ENCODE measurements at regions of chrX and their contacts with region 1.

Region 1: GRCh38 chrX:10098270-10098713 is 58.5 kb upstream of the CLCN4 start:
- DNase-seq: peak; percentile 80
- H3K4me3 Mint-ChIP-seq: peak overlapping the region; percentile 69
- H3K27ac Mint-ChIP-seq: peak overlapping the region; percentile 83
- H3K4me1 Mint-ChIP-seq: peaks cover 51% of the 10 kb centered on the region
- H3K27me3 Mint-ChIP-seq: no peaks in the 10 kb centered on the region

Region 2: GRCh38 chrX:9456250-9457074 is 641.8 kb before region 1 on chrX:
- CTCF ChIA-PET with region 1: no interaction called
- intact Hi-C with region 1: loop called (anchors 2 kb)
- DNase-seq: peak; percentile 45
- H3K4me3 Mint-ChIP-seq: no peak overlapping the region
- H3K27ac Mint-ChIP-seq: peak overlapping the region; percentile 74
- H3K4me1 Mint-ChIP-seq: peaks cover 38% of the 10 kb centered on the region
- H3K27me3 Mint-ChIP-seq: no peaks in the 10 kb centered on the region

Region 3: DNA sequence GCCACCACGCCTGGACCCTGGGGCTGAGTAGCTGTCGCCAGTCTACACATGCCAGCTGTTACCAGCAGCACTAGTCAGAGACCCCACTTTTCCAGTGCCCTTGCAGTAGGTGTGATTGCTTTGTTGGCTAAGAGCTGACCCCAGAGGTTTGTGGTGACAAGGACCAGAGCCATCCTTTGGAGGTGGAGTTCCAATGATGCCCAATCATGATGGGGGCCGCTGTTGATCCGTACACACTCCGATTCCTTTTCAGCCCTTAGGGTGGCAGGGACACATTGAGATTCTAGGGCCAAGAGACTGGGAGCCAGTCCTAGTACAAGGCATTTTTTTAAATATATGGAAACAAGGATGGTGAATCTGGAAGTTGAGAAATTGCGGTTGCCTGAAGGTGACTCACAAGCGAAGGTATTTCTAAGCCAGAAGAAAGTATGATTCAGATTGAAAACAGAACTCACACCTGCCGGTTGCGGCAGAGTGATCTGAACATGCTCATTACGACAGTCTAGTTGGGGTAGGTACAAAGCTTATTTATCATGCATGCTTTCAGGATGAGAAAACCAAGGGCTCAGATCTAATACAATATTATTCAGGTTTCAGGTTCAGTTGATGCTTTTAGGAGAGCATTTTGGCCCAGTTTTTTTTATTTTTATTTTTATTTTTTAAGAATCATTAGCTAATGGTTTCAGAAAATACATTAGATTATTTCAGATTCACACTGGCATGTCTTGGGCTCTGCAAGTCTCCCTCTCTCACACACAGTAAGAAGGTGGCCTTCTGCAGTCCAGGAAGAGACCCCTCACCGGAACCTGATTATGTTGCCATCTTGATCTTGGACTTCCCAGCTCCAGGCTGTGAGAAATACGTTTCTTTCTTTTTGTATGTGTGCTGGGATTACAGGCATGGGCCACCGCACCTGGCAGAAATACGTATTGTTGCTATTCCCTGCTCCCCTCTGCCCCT is 268.7 kb before region 1 on chrX:
- CTCF ChIA-PET with region 1: no interaction called
- intact Hi-C with region 1: loop called (anchors 1 kb)
- DNase-seq: peak; percentile 71
- H3K4me3 Mint-ChIP-seq: no peak overlapping the region
- H3K27ac Mint-ChIP-seq: no peak overlapping the region
- H3K4me1 Mint-ChIP-seq: peaks cover 4% of the 10 kb centered on the region
- H3K27me3 Mint-ChIP-seq: peaks cover 13% of the 10 kb centered on the region

Region 4: GRCh38 chrX:10014462-10015356 is 83.6 kb before region 1 on chrX:
- CTCF ChIA-PET with region 1: no interaction called
- intact Hi-C with region 1: loop called (anchors 2 kb)
- DNase-seq: peak; percentile 71
- H3K4me3 Mint-ChIP-seq: peak overlapping the region; percentile 67
- H3K27ac Mint-ChIP-seq: peak overlapping the region; percentile 30
- H3K4me1 Mint-ChIP-seq: peaks cover 35% of the 10 kb centered on the region
- H3K27me3 Mint-ChIP-seq: peaks cover 4% of the 10 kb centered on the region

Region 5: GRCh38 chrX:10083809-10084208 is 14.5 kb before region 1 on chrX:
- CTCF ChIA-PET with region 1: interaction called, 7 read pairs
- intact Hi-C with region 1: loop called (anchors 1 kb)
- DNase-seq: no peak
- H3K4me3 Mint-ChIP-seq: no peak overlapping the region
- H3K27ac Mint-ChIP-seq: no peak overlapping the region
- H3K4me1 Mint-ChIP-seq: peaks cover 34% of the 10 kb centered on the region
- H3K27me3 Mint-ChIP-seq: no peaks in the 10 kb centered on the region

Region 6: GRCh38 chrX:10111364-10112148 is 13.3 kb after region 1 on chrX:
- CTCF ChIA-PET with region 1: interaction called, 12 read pairs
- intact Hi-C with region 1: loop called (anchors 1 kb)
- DNase-seq: peak; percentile 59
- H3K4me3 Mint-ChIP-seq: peak overlapping the region; percentile 64
- H3K27ac Mint-ChIP-seq: peak overlapping the region; percentile 91
- H3K4me1 Mint-ChIP-seq: peaks cover 56% of the 10 kb centered on the region
- H3K27me3 Mint-ChIP-seq: no peaks in the 10 kb centered on the region

Region 7: DNA sequence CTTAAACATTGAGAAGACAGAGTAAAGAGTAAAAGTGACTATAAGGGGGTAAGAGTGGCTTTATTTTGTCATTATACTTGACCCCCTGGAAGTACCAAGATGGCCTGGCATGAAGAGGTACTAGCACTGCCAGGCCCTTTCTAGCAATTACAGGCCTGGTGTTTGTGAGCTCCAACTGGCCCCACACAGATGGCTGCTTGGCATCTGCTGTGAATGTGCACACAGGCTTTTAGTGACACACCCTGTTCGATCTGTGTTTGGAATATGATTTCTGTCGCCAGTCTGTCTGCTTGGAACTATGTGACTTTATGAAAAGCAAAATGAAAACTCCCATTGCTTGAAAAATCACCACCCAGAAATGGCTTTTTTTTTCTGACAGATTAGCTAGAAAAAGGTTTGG is 181.8 kb after region 1 on chrX:
- CTCF ChIA-PET with region 1: no interaction called
- intact Hi-C with region 1: no loop called
- DNase-seq: no peak
- H3K4me3 Mint-ChIP-seq: no peak overlapping the region
- H3K27ac Mint-ChIP-seq: no peak overlapping the region
- H3K4me1 Mint-ChIP-seq: no peaks in the 10 kb centered on the region
- H3K27me3 Mint-ChIP-seq: no peaks in the 10 kb centered on the region

Region 8: DNA sequence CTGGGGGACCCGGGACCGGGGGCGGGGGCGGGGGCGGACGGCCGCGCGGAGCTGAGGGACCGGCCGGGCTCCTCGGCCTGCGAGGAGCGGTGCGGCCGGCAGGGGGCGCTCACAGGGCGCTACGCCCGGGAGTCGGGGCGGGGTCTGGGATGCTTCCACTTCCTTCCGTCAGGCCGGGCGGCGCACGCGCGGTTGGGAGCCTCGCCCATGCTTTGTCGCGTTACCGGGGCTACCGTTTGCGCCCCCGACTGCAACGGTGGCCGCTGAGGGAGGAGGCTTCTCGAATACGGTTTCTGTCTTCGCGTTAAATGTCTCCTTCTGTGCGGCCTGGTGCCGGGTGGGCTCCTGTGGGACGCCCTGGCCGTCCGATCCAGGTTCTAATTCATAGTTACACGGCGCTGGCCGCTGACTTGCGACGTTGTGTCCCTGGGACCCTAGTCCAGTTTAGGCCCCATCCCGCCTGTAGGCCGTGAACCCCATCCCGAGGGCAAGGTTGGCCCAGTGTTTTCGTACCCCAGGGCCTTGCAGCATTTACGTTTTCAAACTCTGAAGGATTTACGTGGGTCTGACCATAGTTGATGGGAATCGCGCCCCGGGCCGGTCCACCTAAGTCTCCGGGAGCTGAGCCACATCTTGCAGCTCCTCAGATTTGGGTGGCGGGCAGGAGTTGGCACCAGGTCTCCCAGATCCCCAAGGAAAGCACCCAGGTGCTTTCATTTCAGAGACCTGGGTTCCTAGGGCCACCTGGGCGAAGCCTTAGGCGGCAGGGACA is 1660.3 kb after region 1 on chrX:
- CTCF ChIA-PET with region 1: no interaction called
- intact Hi-C with region 1: loop called (anchors 5 kb)
- DNase-seq: peak; percentile 89
- H3K4me3 Mint-ChIP-seq: peak overlapping the region; percentile 94
- H3K27ac Mint-ChIP-seq: peak overlapping the region; percentile 100
- H3K4me1 Mint-ChIP-seq: peaks cover 20% of the 10 kb centered on the region
- H3K27me3 Mint-ChIP-seq: no peaks in the 10 kb centered on the region